Activated CD4-positive, alpha-beta T cell treated with anti-CD3 and anti-CD28 coated beads, Interleukin-2, amount 10 ng/mL, durations not matched to agents 24 days and 14 days (primary cell): ENCODE measurements at regions of chr10 and their contacts with region 1.

Region 1: GRCh38 chr10:26486991-26487850 is 49.1 kb downstream of the APBB1IP start:
- DNase-seq: peak; percentile 90
- H3K4me3 Mint-ChIP-seq: peak overlapping the region; percentile 76
- H3K27ac Mint-ChIP-seq: peak overlapping the region; percentile 96
- H3K4me1 Mint-ChIP-seq: peaks cover 52% of the 10 kb centered on the region
- H3K27me3 Mint-ChIP-seq: no peaks in the 10 kb centered on the region

Region 2: DNA sequence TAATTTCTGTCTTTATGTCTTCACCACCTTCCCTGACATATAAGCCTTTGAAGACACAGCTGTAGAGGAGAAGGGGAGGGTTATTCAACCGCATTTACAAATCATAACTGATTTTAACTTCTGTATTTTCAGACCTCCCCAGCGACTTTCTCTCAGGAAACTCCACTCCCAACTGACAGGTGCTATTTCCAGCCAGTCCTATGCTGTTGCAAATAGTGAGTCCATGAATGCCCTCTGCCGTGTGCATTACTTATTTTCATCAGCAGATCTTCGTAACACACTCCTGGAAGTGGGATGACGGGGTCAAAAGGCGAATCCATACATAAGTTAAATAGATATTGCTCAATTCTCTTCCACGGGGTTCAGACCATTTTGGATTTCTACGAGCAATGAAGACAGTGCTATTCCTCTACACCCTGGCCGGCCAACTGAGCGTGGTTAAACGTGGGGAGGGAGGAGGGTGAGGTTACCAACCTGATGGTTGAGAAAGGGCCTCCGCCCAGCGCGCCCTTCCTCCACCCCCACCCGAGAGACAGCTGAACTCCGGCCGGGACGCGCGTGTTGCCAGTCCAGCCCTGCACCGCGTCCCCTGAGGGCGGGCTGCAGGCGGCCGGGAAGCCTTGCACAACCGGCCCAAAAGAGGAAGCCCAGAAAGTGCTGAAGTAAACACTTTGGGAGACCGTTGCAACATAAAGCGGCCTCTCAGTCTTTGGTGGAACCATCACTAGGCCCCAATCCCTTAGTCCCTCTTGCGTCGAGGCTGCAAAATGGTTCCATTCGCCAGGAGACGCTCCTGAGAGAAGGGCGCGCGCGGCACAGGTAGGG is 49.4 kb before region 1 on chr10 and contains the start of gene APBB1IP:
- intact Hi-C with region 1: loop called (anchors 2 kb)
- DNase-seq: peak; percentile 87
- H3K4me3 Mint-ChIP-seq: peak within 1 kb of the TSS; percentile 92
- H3K27ac Mint-ChIP-seq: peak within 1 kb of the TSS; percentile 95
- H3K4me1 Mint-ChIP-seq: peaks cover 37% of the 10 kb centered on the region
- H3K27me3 Mint-ChIP-seq: no peaks in the 10 kb centered on the region
- total RNA-seq, gene APBB1IP: 40.0 and 41.3 TPM in 2 replicates

Region 3: DNA sequence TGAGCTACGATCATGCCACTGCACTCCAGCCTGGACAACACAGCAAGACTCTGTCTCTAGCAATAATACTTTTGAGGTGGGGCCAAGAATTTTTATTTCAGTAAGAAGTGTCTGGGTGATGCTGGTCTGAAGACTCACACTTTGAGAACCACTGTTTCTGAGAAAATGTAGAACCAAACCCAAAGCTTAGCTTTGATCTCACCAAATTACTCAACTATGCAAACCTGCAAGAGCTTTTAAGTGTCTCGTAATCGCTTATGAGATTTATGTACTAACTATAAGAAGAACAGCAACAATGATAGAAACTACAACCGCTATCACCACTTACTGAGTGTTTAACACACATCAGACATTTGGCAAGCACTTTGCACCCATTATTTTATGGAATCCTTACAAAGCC is 19.6 kb before region 1 on chr10:
- intact Hi-C with region 1: loop called (anchors 1 kb)
- DNase-seq: no peak
- H3K4me3 Mint-ChIP-seq: peak overlapping the region; percentile 47
- H3K27ac Mint-ChIP-seq: peak overlapping the region; percentile 73
- H3K4me1 Mint-ChIP-seq: peaks cover 58% of the 10 kb centered on the region
- H3K27me3 Mint-ChIP-seq: no peaks in the 10 kb centered on the region

Region 4: GRCh38 chr10:26540601-26541000 is 53.4 kb after region 1 on chr10:
- intact Hi-C with region 1: loop called (anchors 5 kb)
- DNase-seq: peak; percentile 64
- H3K4me3 Mint-ChIP-seq: no peak overlapping the region
- H3K27ac Mint-ChIP-seq: peak overlapping the region; percentile 31
- H3K4me1 Mint-ChIP-seq: peaks cover 18% of the 10 kb centered on the region
- H3K27me3 Mint-ChIP-seq: no peaks in the 10 kb centered on the region

Region 5: GRCh38 chr10:26737730-26738129 is 250.5 kb after region 1 on chr10:
- intact Hi-C with region 1: loop called (anchors 2 kb)
- DNase-seq: peak; percentile 83
- H3K4me3 Mint-ChIP-seq: peak overlapping the region; percentile 47
- H3K27ac Mint-ChIP-seq: peak overlapping the region; percentile 98
- H3K4me1 Mint-ChIP-seq: peaks cover 42% of the 10 kb centered on the region
- H3K27me3 Mint-ChIP-seq: no peaks in the 10 kb centered on the region

Region 6: DNA sequence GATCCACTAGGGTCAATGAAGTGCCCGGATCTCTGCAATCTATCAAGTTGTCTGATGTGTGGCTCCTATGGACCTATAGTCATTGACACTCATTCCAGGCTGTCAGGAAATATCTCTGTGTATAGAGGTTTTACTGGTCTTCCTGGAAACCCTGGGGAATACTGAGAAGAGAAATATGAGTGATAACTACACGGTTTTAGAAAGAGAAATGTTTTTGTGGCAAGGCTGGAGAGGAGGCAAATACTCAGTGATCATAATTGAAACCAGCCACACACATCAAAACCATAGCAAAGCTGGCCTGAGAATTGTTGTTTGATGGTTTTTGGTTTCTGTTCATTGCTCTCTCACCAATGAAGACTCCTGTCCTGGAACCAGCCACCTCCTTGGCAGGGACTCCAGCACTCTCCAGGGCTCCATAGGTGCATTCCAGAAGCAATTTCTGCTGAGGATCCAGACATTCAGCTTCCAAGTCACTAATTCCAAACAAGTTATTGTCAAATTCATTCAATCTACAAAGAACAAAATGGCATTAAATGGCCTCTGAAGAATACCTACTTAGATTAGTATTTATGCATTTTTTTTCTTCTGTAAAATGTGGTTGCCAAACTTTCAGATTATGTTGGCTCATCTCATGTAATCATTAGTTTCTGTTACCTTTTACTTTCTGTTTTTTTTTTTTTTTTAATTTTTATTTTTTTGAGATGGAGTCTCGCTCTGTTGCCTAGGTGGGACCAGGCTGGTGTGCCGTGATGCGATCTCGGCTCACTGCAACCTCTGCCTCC is 482.1 kb after region 1 on chr10:
- intact Hi-C with region 1: loop called (anchors 2 kb)
- DNase-seq: peak; percentile 62
- H3K4me3 Mint-ChIP-seq: no peak overlapping the region
- H3K27ac Mint-ChIP-seq: peak overlapping the region; percentile 66
- H3K4me1 Mint-ChIP-seq: peaks cover 26% of the 10 kb centered on the region
- H3K27me3 Mint-ChIP-seq: no peaks in the 10 kb centered on the region